ENCODE measurements at regions of chr5 and their contacts with region 1.

Region 1: GRCh38 chr5:170278611-170279452 is 18.7 kb downstream of the LCP2 start:
- DNase-seq: peak; percentile 90
- H3K4me3 Mint-ChIP-seq: peak overlapping the region; percentile 45
- H3K27ac Mint-ChIP-seq: peak overlapping the region; percentile 83
- H3K4me1 Mint-ChIP-seq: peaks cover 95% of the 10 kb centered on the region
- H3K27me3 Mint-ChIP-seq: no peaks in the 10 kb centered on the region

Region 2: DNA sequence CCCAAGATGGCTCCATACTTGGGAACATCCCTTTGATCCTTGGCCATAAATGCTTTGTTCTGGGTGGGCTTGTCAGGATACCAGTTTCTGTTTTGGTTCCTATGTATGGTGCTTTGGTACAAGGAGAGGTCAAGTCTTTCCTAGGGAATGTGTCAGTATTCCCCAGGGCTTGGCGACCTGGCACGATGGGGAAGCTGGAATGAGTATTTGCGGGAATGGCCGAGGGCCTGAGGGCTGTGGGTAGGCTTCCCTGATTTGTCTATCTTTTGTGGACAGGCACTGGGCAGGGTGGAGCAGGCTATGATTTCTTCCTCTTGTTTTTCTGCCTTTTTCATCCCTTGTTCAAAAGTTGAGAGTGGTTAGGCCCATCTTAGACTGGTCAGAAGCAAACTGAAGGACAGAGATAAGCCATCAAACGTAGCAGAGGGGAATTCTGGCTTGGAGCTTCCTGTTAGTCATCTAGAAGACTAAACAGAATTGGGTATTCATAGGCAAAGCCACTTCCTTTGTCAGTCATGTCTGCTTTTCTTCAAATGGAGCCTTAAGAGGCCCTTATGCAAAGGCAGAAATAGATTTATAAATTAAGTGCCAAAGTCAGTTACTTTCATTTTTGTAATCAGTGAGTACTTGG is 628.0 kb before region 1 on chr5:
- CTCF ChIA-PET with region 1: no interaction called
- intact Hi-C with region 1: loop called (anchors 5 kb)
- DNase-seq: peak; percentile 64
- H3K4me3 Mint-ChIP-seq: peak overlapping the region; percentile 49
- H3K27ac Mint-ChIP-seq: peak overlapping the region; percentile 94
- H3K4me1 Mint-ChIP-seq: peaks cover 92% of the 10 kb centered on the region
- H3K27me3 Mint-ChIP-seq: no peaks in the 10 kb centered on the region

Region 3: DNA sequence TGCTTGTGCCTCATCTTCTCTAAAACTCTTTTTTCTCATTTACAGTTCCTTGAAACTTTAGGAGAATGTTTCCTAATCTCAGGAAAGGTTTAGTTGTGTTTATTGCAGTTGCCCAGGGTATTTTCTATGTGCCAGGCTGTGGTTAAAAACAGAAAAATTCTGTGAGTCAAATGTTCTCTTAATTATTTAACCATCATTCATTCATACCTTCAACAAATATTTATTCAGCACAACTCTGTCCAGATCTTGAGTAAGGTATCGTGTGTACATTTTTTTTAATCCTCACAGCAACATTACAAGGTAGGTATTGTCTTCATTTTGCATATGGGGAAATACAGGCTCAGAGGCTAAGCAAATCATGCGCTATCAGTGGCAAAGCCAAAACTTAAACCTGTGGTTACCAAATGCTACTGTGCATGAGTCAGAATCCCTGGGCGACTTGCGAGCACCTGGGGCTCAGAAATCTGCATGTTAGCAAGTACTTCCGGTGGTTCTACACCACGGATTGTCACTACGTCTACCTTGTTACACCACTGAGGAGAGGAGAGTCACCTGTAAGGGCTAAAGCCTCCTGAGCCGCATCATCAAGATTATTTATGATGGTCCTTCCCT is 24.9 kb before region 1 on chr5:
- CTCF ChIA-PET with region 1: interaction called, 8 read pairs
- intact Hi-C with region 1: loop called (anchors 1 kb)
- DNase-seq: peak; percentile 86
- H3K4me3 Mint-ChIP-seq: no peak overlapping the region
- H3K27ac Mint-ChIP-seq: peak overlapping the region; percentile 83
- H3K4me1 Mint-ChIP-seq: peaks cover 62% of the 10 kb centered on the region
- H3K27me3 Mint-ChIP-seq: no peaks in the 10 kb centered on the region

Region 4: GRCh38 chr5:170302653-170303501 is 24.0 kb after region 1 on chr5:
- CTCF ChIA-PET with region 1: interaction called, 281 read pairs
- intact Hi-C with region 1: no loop called
- DNase-seq: peak; percentile 69
- H3K4me3 Mint-ChIP-seq: peak overlapping the region; percentile 78
- H3K27ac Mint-ChIP-seq: peak overlapping the region; percentile 96
- H3K4me1 Mint-ChIP-seq: peaks cover 93% of the 10 kb centered on the region
- H3K27me3 Mint-ChIP-seq: no peaks in the 10 kb centered on the region

Region 5: DNA sequence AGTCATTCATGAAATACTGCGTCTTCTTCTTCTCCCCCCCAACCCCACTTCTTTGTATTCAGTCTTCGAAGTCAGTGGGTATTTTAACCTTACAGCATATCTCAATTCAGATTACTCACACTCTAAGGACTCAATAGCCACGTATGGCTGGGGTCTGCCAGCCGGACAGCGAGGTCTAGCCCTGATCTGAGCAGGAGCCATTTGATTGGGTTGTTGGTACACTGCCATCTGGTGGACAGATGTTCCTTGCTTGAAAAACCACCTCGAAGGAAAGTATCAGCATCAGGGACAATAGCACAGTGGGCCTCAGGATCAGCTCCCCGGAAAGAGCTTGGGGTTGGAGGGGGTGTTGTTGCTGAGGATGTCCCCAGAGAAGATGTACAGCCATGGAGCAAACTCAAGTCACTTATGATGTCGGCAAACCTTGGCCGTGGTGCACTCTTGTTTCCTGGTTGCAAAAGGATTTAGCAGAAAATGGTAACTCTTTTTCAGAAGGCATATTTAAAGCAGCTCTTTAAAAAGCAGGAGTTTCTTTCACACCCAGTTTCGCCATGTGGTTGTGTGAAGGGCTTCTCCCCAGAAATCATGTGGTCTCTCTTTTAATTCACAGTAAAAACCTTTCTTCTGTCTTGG is 142.1 kb after region 1 on chr5:
- CTCF ChIA-PET with region 1: interaction called, 5 read pairs
- intact Hi-C with region 1: loop called (anchors 5 kb)
- DNase-seq: peak; percentile 71
- H3K4me3 Mint-ChIP-seq: no peak overlapping the region
- H3K27ac Mint-ChIP-seq: no peak overlapping the region
- H3K4me1 Mint-ChIP-seq: peaks cover 15% of the 10 kb centered on the region
- H3K27me3 Mint-ChIP-seq: no peaks in the 10 kb centered on the region

Region 6: GRCh38 chr5:172052450-172053236 is 1773.8 kb after region 1 on chr5:
- CTCF ChIA-PET with region 1: no interaction called
- intact Hi-C with region 1: no loop called
- DNase-seq: no peak
- H3K4me3 Mint-ChIP-seq: no peak overlapping the region
- H3K27ac Mint-ChIP-seq: no peak overlapping the region
- H3K4me1 Mint-ChIP-seq: peaks cover 4% of the 10 kb centered on the region
- H3K27me3 Mint-ChIP-seq: no peaks in the 10 kb centered on the region

Measured in activated naive CD4-positive, alpha-beta T cell treated with anti-CD3 and anti-CD28 coated beads for 36 hours (primary cell).